ENCODE measurements at regions of chr3 and their contacts with region 1.

Region 1: DNA sequence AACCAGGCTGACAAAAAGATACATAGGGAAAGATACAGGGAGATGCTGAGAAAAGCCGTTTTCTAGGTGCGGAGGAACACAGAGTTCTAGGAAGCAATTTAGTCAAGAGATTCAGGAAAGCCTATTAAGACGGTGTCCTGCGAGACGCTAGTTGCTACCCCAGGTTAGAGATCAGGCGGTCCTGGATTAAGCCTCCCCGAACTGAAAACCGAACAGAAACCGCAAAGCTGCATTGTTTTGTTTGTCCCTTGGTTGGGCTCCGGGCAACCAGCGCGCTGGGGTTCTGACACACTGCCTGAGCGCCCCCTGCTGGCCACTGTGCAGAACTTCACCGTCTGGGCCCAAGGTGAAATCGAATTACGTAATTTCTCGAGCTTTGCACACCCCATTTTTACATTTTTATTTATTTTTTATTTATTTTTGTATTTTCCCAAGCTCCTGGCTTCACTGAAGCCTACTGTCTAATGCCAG is 37.3 kb upstream of the NDUFB4 start:
- DNase-seq: peak; percentile 93 to 96
- ATAC-seq: peak; percentile 94
- H3K4me3 ChIP-seq: peak overlapping the region; percentile 48 to 49
- H3K27ac ChIP-seq: peak overlapping the region; percentile 82 to 84
- H3K4me1 ChIP-seq: no peaks in the 10 kb centered on the region
- H3K27me3 ChIP-seq: no peaks in the 10 kb centered on the region

Region 2: GRCh38 chr3:119517112-119517511 is 1041.7 kb before region 1 on chr3:
- intact Hi-C with region 1: no loop called
- DNase-seq: no peak
- ATAC-seq: no peak
- H3K4me3 ChIP-seq: no peak overlapping the region
- H3K27ac ChIP-seq: no peak overlapping the region
- H3K4me1 ChIP-seq: no peaks in the 10 kb centered on the region
- H3K27me3 ChIP-seq: no peaks in the 10 kb centered on the region

Region 3: GRCh38 chr3:120239644-120240043 is 319.2 kb before region 1 on chr3:
- intact Hi-C with region 1: loop called (anchors 1 to 5 kb)
- DNase-seq: no peak
- ATAC-seq: no peak
- H3K4me3 ChIP-seq: no peak overlapping the region
- H3K27ac ChIP-seq: no peak overlapping the region
- H3K4me1 ChIP-seq: no peaks in the 10 kb centered on the region
- H3K27me3 ChIP-seq: no peaks in the 10 kb centered on the region

Region 4: GRCh38 chr3:120348981-120349818 is 209.6 kb before region 1 on chr3 and contains the start of gene LRRC58:
- intact Hi-C with region 1: loop called in 1 of 2 experiments (anchors 5 kb)
- DNase-seq: peak; percentile 95 to 97
- ATAC-seq: peak; percentile 97
- H3K4me3 ChIP-seq: peak within 1 kb of the TSS; percentile 44 to 51
- H3K27ac ChIP-seq: peak within 1 kb of the TSS; percentile 64 to 68
- H3K4me1 ChIP-seq: no peaks in the 10 kb centered on the region
- H3K27me3 ChIP-seq: no peaks in the 10 kb centered on the region
- total RNA-seq, gene LRRC58: 18.0 to 19.2 TPM

Region 5: DNA sequence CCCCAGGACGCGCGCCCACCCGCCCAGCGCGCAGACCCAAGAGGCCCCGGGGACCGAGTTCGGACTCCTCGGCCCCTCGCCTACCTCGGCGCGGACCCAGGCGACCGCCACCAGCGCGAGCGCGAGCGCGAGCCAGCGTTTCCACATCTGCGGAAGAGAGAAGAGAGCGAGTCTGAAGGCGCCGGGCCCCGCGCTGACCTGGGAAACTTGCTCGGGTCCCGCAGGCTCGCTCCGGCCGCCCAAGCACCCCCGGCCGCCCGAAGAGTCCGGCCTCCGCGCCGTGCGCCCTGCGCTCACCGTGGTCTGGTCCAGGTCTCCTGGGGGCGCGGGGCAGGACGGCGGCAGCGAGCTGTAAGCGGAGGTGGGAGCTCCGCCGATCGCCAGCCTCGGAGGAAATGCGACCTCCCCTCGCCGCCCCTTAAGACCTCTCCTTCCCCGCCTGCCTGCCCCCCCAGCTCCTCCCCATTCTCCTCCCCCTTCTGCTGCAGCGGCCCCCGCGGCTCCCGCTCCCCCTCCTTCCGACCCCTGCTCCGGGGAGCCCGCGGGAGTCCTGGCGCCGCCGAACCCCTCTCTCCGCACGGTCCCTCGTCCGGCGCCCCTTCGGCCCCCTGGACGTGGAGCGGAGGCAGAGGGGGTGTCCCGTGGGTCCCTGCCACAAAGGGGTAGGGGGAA is 108.1 kb before region 1 on chr3 and contains the start of gene FSTL1:
- intact Hi-C with region 1: loop called in 1 of 2 experiments (anchors 5 kb)
- DNase-seq: peak; percentile 79 to 91
- ATAC-seq: peak; percentile 86
- H3K4me3 ChIP-seq: peak within 1 kb of the TSS; percentile 90 to 98
- H3K27ac ChIP-seq: peak within 1 kb of the TSS; percentile 90 to 97
- H3K4me1 ChIP-seq: peaks cover 0 to 8% of the 10 kb centered on the region in 2 donors
- H3K27me3 ChIP-seq: no peaks in the 10 kb centered on the region
- total RNA-seq, gene FSTL1: 716 to 833 TPM

Region 6: DNA sequence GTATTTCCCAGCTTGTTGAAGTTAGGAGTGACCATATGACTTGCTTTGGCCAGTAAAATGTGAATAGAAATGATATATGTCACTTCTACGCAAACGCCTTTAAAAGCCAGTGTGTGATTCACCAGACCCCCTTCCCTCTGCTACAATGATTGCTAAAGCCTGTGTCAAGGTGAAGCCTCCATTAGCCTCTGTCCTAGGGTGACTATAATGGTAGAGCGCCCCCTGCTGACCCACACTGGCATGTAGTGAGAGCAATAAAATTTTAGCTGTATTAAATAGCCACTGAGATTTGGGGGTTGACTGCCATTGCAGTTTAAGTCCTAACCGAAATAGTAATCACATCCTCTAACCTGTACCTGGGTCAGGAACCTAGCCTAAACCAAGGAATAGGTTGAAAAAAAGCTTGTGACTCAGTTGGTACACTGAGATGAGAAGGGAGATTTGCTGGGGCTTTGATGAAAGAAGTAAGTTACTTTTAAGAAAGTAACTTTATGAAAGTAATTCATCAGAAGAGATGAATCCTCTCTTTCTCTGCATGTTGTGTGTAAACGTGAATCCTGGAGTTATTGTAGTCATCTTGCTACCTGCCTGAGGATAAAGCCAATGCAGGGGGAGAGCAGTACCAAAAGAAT is 236.3 kb after region 1 on chr3:
- intact Hi-C with region 1: loop called in 1 of 2 experiments (anchors 5 kb)
- DNase-seq: peak; percentile 84 to 90
- ATAC-seq: peak; percentile 78
- H3K4me3 ChIP-seq: no peak overlapping the region
- H3K27ac ChIP-seq: no peak overlapping the region
- H3K4me1 ChIP-seq: no peaks in the 10 kb centered on the region
- H3K27me3 ChIP-seq: no peaks in the 10 kb centered on the region

Measured in aorta (tissue), 5 donors.